ENCODE measurements at regions of chr20 and their contacts with region 1.

Region 1: GRCh38 chr20:2873010-2873746 is at the start of gene PTPRA:
- DNase-seq: peak; percentile 98
- H3K4me3 Mint-ChIP-seq: peak within 1 kb of the TSS; percentile 96
- H3K27ac Mint-ChIP-seq: peak within 1 kb of the TSS; percentile 96
- H3K4me1 Mint-ChIP-seq: peaks cover 48% of the 10 kb centered on the region
- H3K27me3 Mint-ChIP-seq: peaks cover 2% of the 10 kb centered on the region
- total RNA-seq, gene PTPRA: 66.5 and 71.5 TPM in 2 replicates

Region 2: DNA sequence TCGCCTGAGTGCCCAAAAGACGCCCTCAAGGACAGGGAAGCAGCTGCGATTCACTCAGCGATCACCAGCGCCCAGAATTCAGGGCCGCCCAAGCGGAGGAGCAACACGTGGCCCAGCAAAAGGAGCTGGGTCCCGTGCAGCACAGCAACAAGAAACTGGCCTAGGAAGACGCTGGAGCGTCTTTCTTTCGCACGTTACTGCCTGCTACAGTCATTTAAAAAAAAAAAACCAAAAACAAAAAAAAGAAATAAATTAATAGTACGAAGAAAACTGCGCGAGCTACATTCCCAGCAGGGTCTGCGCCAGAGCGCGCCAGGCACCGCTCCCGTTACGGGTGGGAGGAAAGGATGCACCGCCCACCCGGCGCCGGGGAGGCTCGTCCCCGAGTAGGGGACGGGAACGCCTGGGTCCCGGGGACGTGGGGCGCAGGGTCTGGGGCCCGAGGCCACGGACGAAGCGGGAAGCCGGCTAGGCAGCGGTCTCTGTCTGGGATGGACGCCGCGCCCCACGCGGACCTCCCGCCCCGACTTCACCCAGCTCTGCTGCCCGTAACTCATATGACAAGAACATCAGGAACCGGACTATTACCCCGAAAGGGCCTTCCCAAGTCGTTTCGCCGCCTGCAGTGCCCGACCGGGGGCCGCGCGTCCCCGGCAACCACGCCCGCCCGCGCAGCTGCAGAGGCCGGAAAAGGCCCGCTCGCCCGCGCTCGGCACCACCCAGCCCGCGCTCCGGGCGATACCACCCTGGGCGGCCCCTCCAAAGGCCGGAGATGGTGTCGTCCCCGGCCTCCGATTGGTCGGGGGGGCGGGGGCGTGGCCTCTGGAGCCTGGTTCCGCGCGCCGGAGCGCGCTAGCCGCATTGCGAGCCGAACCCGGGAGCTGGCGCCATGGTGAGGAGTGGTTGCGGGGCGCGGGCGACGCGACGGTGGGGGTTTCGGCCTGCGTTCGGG is 221.1 kb before region 1 on chr20 and contains the start of gene NOP56:
- intact Hi-C with region 1: loop called (anchors 5 kb)
- DNase-seq: peak; percentile 99
- H3K4me3 Mint-ChIP-seq: peak within 1 kb of the TSS; percentile 94
- H3K27ac Mint-ChIP-seq: peak within 1 kb of the TSS; percentile 92
- H3K4me1 Mint-ChIP-seq: peaks cover 32% of the 10 kb centered on the region
- H3K27me3 Mint-ChIP-seq: no peaks in the 10 kb centered on the region
- total RNA-seq, gene NOP56: 884 and 899 TPM in 2 replicates

Region 3: DNA sequence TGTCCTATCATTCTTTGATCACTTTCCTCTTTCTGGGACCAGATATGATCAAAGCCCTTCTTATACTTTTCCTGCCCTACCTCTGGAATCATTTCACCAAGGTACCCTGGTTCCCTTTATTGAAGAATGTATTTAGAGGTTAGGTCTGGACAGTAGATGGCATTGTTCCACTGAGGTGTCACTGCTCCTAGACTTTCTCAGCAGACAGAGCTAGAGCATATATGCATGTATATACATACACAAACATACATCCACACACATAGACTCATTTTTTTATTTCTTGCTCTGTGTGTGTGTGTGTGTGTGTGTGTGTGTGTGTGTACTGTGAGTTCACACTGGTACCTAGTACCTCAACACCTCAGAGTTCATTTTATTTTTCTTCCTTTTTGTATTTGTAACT is 41.0 kb after region 1 on chr20:
- intact Hi-C with region 1: loop called (anchors 5 kb)
- DNase-seq: no peak
- H3K4me3 Mint-ChIP-seq: no peak overlapping the region
- H3K27ac Mint-ChIP-seq: no peak overlapping the region
- H3K4me1 Mint-ChIP-seq: peaks cover 6% of the 10 kb centered on the region
- H3K27me3 Mint-ChIP-seq: no peaks in the 10 kb centered on the region

Region 4: DNA sequence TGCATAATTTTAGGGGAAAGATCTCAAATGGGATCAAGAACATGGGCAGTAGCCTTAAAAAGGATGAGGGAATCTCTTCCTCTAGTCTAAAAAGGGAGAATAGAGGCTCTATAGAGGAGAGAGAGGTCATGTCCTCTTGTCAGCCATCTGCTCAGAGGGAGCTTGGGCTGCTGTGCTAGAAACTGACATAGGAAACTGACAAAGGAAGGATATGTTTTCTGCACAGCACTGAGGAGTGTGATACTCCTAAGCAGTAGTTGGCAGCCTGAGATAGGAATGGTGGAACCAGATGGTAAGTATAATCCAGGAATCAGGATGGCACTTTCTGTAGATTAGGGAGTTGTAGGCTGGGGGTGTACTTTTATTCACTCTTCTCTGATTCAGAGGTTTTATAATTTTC is 59.3 kb after region 1 on chr20:
- intact Hi-C with region 1: no loop called
- DNase-seq: no peak
- H3K4me3 Mint-ChIP-seq: no peak overlapping the region
- H3K27ac Mint-ChIP-seq: no peak overlapping the region
- H3K4me1 Mint-ChIP-seq: no peaks in the 10 kb centered on the region
- H3K27me3 Mint-ChIP-seq: no peaks in the 10 kb centered on the region

Region 5: DNA sequence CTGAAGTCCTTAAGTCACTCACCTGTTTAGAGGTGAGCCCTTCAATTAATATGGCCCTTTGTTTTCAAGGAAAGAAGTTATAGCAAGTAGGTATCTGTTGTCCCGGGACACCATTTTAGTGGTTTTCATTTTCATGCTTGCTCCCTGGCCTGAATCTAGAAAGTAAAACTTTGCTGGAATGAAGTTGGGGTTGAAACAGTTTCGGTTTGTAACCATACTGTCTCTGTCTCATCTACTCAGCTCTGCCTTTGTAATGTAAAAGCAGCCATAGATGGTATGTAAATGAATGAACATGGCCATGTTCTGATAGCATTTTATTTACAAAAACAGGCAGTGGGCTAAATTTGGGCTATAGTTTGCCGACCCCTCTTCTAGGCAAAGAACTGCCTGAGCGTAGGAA is 105.3 kb after region 1 on chr20:
- intact Hi-C with region 1: no loop called
- DNase-seq: no peak
- H3K4me3 Mint-ChIP-seq: no peak overlapping the region
- H3K27ac Mint-ChIP-seq: peak overlapping the region; percentile 45
- H3K4me1 Mint-ChIP-seq: peaks cover 15% of the 10 kb centered on the region
- H3K27me3 Mint-ChIP-seq: no peaks in the 10 kb centered on the region

Region 6: GRCh38 chr20:3010985-3011723 is 138.0 kb after region 1 on chr20:
- intact Hi-C with region 1: loop called (anchors 5 kb)
- DNase-seq: peak; percentile 72
- H3K4me3 Mint-ChIP-seq: peak overlapping the region; percentile 22
- H3K27ac Mint-ChIP-seq: peak overlapping the region; percentile 86
- H3K4me1 Mint-ChIP-seq: peaks cover 50% of the 10 kb centered on the region
- H3K27me3 Mint-ChIP-seq: no peaks in the 10 kb centered on the region

Region 7: DNA sequence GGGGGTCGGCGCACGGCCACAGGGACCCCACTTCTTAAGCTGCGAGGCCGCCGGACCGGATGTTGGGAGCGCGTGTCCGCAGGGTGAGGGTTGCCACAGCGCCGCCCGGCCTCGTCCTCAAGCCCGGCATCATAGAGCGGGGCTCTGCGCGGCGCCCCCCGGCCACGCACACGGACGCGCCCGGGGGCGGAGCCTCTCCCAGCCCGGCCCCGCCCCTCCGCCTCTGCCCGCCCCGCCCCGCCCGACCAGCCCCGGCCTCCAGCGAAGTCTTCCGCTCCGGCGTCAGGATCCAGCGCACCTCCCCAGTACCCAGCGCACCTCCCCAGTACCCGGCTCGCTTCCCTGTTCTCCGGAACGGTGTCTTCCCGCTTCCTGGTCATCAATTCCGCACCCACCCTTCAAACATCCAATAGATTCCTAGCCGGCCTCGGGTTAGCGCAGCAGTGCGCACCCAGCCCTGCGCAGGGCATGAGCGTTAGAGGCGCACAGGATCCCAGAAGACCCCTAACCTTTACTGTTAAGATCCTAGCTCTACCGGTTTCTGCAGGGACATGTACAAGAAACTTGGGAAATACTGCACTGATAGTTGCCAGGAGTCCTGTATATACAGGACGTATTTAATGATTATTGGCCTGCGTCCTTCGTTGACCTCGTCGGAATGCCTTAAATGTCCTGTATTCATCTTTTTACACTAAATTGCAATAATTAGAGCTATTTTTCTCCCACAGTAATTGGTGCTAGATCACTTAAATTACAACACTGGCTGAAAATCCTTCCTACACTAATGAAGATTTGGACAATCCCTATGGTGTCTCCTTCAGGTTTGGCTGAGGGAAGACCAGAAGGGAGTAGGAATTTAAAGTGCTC is 534.8 kb after region 1 on chr20:
- intact Hi-C with region 1: loop called (anchors 10 kb)
- DNase-seq: peak; percentile 91
- H3K4me3 Mint-ChIP-seq: peak overlapping the region; percentile 91
- H3K27ac Mint-ChIP-seq: peak overlapping the region; percentile 90
- H3K4me1 Mint-ChIP-seq: peaks cover 30% of the 10 kb centered on the region
- H3K27me3 Mint-ChIP-seq: peaks cover 41% of the 10 kb centered on the region